Calu3 (cell line): ENCODE measurements at regions of chr14 and their contacts with region 1.

Region 1: GRCh38 chr14:98242903-98243302 is 1029.1 kb downstream of the BCL11B start:
- DNase-seq: no peak
- H3K4me3 Mint-ChIP-seq: no peak overlapping the region
- H3K27ac Mint-ChIP-seq: no peak overlapping the region
- H3K4me1 Mint-ChIP-seq: no peaks in the 10 kb centered on the region
- H3K27me3 Mint-ChIP-seq: no peaks in the 10 kb centered on the region
- CTCF ChIP-seq: no peak

Region 2: DNA sequence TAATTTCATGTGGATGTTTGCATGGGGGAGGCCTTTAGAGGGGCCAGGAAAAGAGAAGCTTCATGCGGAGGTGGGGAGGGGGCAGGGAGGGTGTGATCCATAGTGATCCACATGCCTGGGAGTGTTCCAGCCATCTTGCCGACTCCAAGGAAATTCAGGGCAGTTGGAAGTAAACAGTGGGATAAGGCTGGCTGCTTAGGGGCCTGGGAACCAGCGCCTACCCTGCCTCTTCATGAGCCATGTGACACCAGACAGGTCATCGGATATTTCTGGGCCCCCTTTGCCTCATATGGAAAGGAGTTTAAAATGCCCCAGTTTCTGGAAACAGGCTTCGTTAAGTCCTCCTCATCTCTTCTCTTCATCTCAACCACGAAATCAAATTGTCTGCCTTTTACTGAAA is 45.9 kb after region 1 on chr14:
- CTCF ChIA-PET with region 1: no interaction called
- intact Hi-C with region 1: loop called (anchors 1 kb)
- DNase-seq: no peak
- H3K4me3 Mint-ChIP-seq: no peak overlapping the region
- H3K27ac Mint-ChIP-seq: no peak overlapping the region
- H3K4me1 Mint-ChIP-seq: no peaks in the 10 kb centered on the region
- H3K27me3 Mint-ChIP-seq: no peaks in the 10 kb centered on the region
- CTCF ChIP-seq: no peak